ENCODE measurements at regions of chr6 and their contacts with region 1.

Region 1: DNA sequence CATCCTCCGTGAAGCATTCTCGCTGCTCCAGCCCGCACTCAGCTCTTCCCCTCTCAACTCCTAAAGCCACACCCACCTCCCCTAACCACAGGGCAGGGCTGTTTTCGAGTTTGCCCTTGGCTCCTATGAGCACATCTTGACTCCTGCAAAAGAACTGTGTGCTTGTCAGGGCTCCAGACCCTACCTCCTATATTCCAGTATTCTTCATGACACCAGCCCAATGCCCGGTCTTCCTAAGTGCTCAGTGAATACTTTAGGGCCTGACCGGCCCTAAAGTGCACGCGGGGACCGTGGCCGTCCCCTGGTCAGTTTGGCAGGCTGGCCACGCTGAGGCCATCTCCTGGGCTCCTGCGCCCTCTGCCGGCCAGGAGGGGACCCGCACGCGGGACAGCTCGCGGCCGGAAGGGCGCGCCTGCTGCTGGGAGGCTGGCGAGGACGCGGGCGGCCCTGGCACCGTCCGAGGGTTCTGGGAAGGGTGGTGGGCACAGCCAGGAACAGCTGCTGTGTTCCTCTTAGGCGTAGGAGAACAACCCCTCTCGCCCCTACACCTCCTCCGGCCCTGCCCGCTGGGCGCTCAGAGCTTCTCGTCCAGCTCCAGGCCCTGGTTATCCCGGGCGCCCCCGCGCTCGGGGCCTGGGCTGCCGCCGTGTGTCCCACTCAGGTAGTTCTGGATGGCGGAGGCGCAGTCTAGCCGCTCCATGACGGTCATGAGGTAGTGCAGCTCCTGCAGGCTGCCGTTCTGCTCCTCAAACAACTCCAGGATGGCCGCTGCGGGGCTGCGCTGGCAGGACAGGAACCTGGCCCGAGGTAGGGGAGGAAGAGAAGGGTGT is 11.0 kb downstream of the UNC5CL start:
- DNase-seq: peak; percentile 63
- H3K4me3 ChIP-seq: peak overlapping the region in 2 of 3 experiments; percentile 28 to 30
- H3K27ac ChIP-seq: no peak overlapping the region
- H3K4me1 ChIP-seq: peaks cover 6% of the 10 kb centered on the region
- H3K27me3 ChIP-seq: peaks cover 0 to 4% of the 10 kb centered on the region in 2 experiments
- CTCF ChIP-seq: peak; percentile 97 to 98
- POLR2A ChIP-seq: no peak

Region 2: DNA sequence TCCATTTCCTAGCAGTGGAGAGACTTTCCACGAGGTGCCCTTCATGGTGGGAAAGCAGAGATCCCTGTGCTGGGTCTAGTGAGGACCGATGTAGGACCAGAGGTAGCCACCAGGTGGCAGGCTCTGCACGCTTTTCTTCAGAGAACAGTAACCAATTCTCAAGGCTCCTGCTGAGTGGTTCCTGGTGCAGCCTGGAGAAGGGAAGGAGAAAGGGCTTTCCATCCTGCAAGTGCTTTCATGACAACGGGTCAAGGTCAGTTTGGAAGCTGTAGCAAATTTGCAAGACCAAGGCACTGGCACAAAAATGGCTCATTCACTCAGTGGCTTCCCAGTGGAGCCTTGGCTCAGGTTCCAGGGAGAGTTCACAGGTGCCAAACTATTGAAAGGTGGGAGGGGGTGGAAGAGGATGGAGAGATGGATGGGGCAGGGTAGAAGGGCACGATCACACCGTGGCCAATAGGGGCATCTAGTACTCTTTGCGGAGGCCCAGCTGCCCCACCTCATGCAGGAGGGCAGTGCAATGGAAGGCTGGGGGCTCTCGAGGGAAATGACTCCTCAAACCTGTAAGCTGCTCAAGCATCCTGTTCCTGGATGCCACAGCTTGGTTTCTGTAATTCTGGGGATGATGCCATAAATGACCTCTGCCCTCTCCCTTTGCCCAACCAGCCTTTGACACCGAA is 1680.0 kb before region 1 on chr6:
- CTCF ChIA-PET with region 1: interaction called, 3 read pairs
- POLR2A ChIA-PET with region 1: no interaction called
- dilution Hi-C with region 1: no loop called
- intact Hi-C with region 1: loop called (anchors 5 kb)
- DNase-seq: peak; percentile 56
- H3K4me3 ChIP-seq: no peak overlapping the region
- H3K27ac ChIP-seq: no peak overlapping the region
- H3K4me1 ChIP-seq: no peaks in the 10 kb centered on the region
- H3K27me3 ChIP-seq: no peaks in the 10 kb centered on the region
- CTCF ChIP-seq: peak; percentile 78 to 87
- POLR2A ChIP-seq: no peak

Region 3: GRCh38 chr6:40293460-40294188 is 734.4 kb before region 1 on chr6:
- CTCF ChIA-PET with region 1: no interaction called
- POLR2A ChIA-PET with region 1: no interaction called
- dilution Hi-C with region 1: no loop called
- intact Hi-C with region 1: no loop called
- DNase-seq: no peak
- H3K4me3 ChIP-seq: no peak overlapping the region
- H3K27ac ChIP-seq: no peak overlapping the region
- H3K4me1 ChIP-seq: no peaks in the 10 kb centered on the region
- H3K27me3 ChIP-seq: no peaks in the 10 kb centered on the region
- CTCF ChIP-seq: no peak
- POLR2A ChIP-seq: no peak

Region 4: GRCh38 chr6:40627316-40627715 is 400.7 kb before region 1 on chr6:
- CTCF ChIA-PET with region 1: no interaction called
- POLR2A ChIA-PET with region 1: no interaction called
- dilution Hi-C with region 1: no loop called
- intact Hi-C with region 1: no loop called
- DNase-seq: no peak
- H3K4me3 ChIP-seq: no peak overlapping the region
- H3K27ac ChIP-seq: no peak overlapping the region
- H3K4me1 ChIP-seq: no peaks in the 10 kb centered on the region
- H3K27me3 ChIP-seq: no peaks in the 10 kb centered on the region
- CTCF ChIP-seq: no peak
- POLR2A ChIP-seq: no peak

Region 5: DNA sequence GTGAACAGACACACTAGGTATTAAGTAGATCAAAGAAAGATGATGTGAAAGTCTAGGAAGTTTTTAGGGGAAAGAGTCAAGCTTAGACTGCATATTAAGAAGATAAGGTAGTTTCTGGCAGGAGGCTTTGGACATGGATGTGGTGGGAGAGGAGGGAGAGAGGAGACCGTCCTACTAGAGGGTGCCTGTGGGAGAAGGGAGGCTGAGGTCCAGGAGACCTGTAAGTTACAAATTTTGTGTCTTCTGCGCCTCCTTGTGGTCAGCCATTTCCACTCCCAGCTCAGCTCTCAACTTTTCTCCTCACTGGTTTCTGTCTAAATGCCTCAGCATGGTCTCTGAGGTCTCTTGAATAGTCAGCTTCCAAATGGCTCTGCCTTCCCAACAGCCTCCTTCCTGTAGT is 182.5 kb before region 1 on chr6:
- CTCF ChIA-PET with region 1: interaction called, 16 read pairs
- POLR2A ChIA-PET with region 1: no interaction called
- dilution Hi-C with region 1: no loop called
- intact Hi-C with region 1: loop called (anchors 5 kb)
- DNase-seq: peak; percentile 45
- H3K4me3 ChIP-seq: no peak overlapping the region
- H3K27ac ChIP-seq: no peak overlapping the region
- H3K4me1 ChIP-seq: no peaks in the 10 kb centered on the region
- H3K27me3 ChIP-seq: peaks cover 4 to 7% of the 10 kb centered on the region in 2 experiments
- CTCF ChIP-seq: peak; percentile 41 to 72
- POLR2A ChIP-seq: no peak

Region 6: DNA sequence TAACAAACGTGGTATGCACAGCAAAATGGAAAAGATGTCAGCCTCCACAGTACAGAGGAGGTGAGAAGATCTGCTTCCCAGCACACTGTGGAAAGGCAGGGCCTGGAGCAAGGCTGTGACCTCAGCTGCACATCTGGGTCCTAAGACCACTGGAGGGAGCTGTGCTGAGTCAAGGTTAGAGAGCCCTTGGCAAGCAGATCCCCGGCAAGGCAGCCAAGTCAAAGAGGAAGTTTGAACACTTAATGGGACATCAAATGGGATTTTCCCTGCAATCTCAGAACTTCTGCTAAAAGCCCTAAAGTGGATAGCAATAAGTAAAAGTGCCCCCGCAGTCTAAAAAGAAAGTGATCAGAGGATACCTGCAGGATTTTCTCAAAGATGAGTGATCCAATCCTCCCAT is 28.4 kb before region 1 on chr6:
- CTCF ChIA-PET with region 1: interaction called, 31 read pairs
- POLR2A ChIA-PET with region 1: no interaction called
- dilution Hi-C with region 1: no loop called
- intact Hi-C with region 1: loop called (anchors 2 kb)
- DNase-seq: peak; percentile 44
- H3K4me3 ChIP-seq: no peak overlapping the region
- H3K27ac ChIP-seq: no peak overlapping the region
- H3K4me1 ChIP-seq: peaks cover 24% of the 10 kb centered on the region
- H3K27me3 ChIP-seq: peaks cover 0 to 5% of the 10 kb centered on the region in 2 experiments
- CTCF ChIP-seq: peak; percentile 34 to 55
- POLR2A ChIP-seq: no peak

Region 7: DNA sequence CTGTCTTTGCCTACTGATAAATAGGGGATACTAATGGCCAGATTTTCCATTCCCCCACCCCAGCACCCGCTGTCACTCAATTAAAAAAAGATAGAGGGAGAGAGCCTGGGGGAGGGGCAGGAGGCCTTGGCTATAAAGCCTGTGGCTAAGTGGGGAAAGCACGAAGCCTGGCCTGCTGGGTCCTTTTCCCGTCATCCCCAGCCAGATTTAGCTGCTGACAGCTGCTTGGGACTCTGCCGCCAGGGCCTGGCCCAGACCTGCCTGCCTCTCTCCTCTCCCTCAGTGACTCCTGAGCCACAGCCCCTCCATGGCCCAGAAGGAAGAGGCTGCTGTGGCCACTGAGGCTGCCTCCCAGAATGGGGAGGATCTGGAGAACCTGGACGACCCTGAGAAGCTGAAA is 25.0 kb after region 1 on chr6 and contains the start of gene APOBEC2:
- CTCF ChIA-PET with region 1: interaction called, 10 read pairs
- POLR2A ChIA-PET with region 1: no interaction called
- dilution Hi-C with region 1: no loop called
- intact Hi-C with region 1: no loop called
- DNase-seq: no peak
- H3K4me3 ChIP-seq: no peak within 1 kb of the TSS
- H3K27ac ChIP-seq: no peak within 1 kb of the TSS
- H3K4me1 ChIP-seq: peaks cover 5% of the 10 kb centered on the region
- H3K27me3 ChIP-seq: peaks cover 0 to 3% of the 10 kb centered on the region in 2 experiments
- CTCF ChIP-seq: no peak
- POLR2A ChIP-seq: no peak
- total RNA-seq, gene APOBEC2: not detected in 2 replicates

Region 8: DNA sequence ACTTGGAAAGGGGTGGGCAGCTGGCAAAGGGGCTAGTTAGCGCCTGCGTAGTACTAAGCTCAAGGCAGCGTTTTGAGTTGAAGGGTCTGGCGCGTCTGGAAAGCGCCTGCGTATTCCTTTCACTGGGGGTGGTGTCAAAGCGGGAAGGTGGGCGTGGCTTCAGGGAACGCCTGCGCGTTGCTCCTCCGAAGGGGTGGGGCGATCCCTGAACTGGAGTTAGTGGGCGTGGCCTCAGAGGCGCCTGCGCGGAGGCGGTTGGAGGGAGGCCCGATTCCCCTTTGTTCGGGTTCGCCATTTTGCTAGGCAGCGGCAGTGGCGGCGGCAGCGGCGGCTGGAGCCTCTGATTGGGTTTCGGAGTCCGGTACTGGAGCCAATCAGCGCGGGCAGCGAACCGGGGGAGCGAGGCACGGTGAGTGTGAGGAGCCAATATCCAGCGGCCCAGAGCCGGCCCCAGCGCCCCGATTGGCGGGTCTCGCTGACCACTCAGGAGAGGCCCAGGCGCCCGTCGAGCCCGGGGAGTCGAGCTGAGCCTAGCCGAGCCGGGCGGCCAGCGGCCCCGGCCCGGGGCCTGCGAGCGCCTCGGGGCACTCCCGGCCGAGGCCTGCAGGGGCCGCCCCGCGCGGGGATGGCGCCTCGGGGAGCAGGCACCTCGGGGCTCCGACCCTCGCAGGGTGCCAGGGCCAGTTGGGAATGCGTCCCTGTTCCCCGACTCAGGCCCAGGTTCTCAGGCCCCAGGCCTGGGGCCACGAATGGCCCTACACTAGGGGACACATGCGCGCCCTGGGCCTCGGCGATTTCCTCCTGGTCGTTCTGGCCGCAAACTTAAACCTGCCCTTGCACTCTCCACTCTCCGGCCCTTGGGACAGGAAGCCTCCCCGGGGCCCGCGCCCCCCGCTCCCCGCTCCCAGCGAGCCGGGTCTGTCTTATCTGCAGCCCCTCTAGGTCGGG is 44.9 kb after region 1 on chr6 and contains the start of gene NFYA:
- CTCF ChIA-PET with region 1: interaction called, 7 read pairs
- POLR2A ChIA-PET with region 1: no interaction called
- dilution Hi-C with region 1: no loop called
- intact Hi-C with region 1: loop called (anchors 1 kb)
- DNase-seq: peak; percentile 100
- H3K4me3 ChIP-seq: peak within 1 kb of the TSS; percentile 84 to 97 (median 90)
- H3K27ac ChIP-seq: peak within 1 kb of the TSS; percentile 98
- H3K4me1 ChIP-seq: peaks cover 21% of the 10 kb centered on the region
- H3K27me3 ChIP-seq: no peaks in the 10 kb centered on the region
- CTCF ChIP-seq: peak; percentile 11 to 29
- POLR2A ChIP-seq: peak; percentile 72
- total RNA-seq, gene NFYA: 29.0 and 30.9 TPM in 2 replicates

Measured in endothelial cell of umbilical vein (primary cell).